ENCODE measurements at regions of chr1 and their contacts with region 1.

Region 1: DNA sequence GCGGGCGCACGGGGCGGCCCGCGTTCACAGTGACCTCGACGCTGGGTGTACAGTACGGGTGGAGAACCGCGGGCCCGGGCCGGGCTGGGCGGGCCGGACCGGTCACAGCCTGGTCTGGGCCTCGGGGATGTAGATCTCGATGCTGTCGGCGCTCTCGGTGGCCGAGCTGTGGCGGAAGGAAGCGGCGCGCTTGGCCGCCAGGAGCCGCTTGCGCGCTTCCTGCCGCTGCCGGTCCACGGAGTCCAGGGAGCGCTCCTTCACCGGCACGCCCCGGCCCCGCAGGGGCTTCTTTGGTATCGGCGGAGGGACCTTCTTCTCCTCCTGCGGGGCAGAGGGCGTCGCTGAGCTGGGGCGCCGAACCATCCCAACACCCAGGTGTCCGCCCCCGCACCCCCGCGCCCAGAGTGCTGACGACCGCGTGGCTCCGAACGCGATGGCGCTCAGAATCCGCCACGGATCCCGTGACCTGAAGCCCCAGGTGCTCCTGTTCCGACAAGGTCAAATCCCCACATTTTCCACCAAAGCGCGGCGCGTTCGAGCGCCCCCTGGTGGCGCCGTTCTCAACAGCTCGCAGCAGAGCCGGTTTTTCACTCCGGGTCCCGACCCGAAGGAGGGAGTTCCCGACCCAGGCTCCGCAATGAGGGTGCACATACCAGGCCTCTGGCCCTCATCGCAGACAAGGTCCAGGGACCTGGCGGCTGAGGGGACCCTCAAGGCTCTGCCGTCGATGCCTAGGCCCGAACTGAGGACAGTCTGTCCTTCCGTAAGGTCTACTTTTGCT is 6.6 kb upstream of the SMIM12 start:
- DNase-seq: no peak
- H3K4me3 ChIP-seq: peak overlapping the region; percentile 73
- CTCF ChIP-seq: peak; percentile 91

Region 2: GRCh38 chr1:34879230-34879629 is 13.1 kb after region 1 on chr1:
- CTCF ChIA-PET with region 1: interaction called, 158 read pairs
- POLR2A ChIA-PET with region 1: no interaction called
- DNase-seq: no peak
- H3K4me3 ChIP-seq: no peak overlapping the region
- CTCF ChIP-seq: no peak

Region 3: DNA sequence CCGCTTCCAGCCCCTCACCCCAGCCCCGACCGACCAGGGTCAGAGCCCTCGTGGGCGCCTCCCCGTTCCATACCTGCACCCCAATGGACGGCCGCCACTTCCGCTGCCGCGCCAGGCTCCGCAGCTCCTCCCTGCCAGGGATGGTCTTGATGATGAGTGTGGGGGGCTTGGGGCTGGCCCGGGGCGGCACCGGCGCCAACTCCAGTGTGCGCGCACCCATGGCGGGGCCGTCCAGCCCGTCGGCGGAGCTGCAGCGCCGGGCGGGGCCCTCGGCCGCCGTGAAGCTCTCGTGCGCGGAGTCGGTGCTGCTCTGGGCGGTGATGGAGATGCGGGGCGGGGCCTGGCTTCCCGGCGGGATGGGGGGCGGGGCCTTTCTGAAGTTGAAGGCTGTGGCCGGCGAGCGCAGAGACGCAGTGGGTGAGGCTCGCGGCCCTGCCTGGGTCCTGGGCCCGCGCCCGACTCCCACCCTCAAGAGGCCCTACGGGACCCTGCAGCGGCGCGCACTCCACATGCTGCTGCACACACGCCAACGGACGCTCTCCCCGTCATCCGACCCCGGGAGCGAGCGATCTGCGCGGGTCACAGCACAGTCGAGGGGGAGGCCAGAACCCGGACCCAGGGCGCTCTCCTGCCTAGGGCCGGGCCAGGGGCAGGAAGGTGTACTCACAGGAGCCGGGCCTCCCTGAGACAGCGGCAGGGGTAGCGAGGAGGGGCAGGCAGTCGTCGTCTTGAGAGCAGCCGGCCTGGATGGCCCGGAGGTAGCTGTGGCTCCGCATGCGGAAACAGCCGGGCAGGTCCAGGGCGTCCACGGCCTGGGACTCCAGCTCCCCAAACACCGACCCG is 19.5 kb after region 1 on chr1:
- CTCF ChIA-PET with region 1: interaction called, 30 read pairs
- POLR2A ChIA-PET with region 1: no interaction called
- DNase-seq: no peak
- H3K4me3 ChIP-seq: peak overlapping the region; percentile 50
- CTCF ChIP-seq: no peak